ENCODE measurements at regions of chr12 and their contacts with region 1.

Region 1: GRCh38 chr12:92554158-92555073 is 148.4 kb upstream of the PLEKHG7 start:
- DNase-seq: no peak
- H3K4me3 ChIP-seq: no peak overlapping the region
- H3K27ac ChIP-seq: peak overlapping the region in 1 of 2 donors; percentile 52
- H3K4me1 ChIP-seq: peaks cover 0 to 50% (median 16%) of the 10 kb centered on the region in 4 donors
- H3K27me3 ChIP-seq: no peaks in the 10 kb centered on the region
- CTCF ChIP-seq: no peak

Region 2: GRCh38 chr12:92505254-92506231 is 48.9 kb before region 1 on chr12:
- intact Hi-C with region 1: loop called (anchors 1 kb)
- DNase-seq: peak; percentile 32 to 82
- H3K4me3 ChIP-seq: peak overlapping the region; percentile 12 to 34
- H3K27ac ChIP-seq: peak overlapping the region; percentile 82 to 86
- H3K4me1 ChIP-seq: peaks cover 0 to 49% (median 38%) of the 10 kb centered on the region in 4 donors
- H3K27me3 ChIP-seq: no peaks in the 10 kb centered on the region
- CTCF ChIP-seq: no peak